GM12878 (cell line): ENCODE measurements at regions of chr3 and their contacts with region 1.

Region 1: DNA sequence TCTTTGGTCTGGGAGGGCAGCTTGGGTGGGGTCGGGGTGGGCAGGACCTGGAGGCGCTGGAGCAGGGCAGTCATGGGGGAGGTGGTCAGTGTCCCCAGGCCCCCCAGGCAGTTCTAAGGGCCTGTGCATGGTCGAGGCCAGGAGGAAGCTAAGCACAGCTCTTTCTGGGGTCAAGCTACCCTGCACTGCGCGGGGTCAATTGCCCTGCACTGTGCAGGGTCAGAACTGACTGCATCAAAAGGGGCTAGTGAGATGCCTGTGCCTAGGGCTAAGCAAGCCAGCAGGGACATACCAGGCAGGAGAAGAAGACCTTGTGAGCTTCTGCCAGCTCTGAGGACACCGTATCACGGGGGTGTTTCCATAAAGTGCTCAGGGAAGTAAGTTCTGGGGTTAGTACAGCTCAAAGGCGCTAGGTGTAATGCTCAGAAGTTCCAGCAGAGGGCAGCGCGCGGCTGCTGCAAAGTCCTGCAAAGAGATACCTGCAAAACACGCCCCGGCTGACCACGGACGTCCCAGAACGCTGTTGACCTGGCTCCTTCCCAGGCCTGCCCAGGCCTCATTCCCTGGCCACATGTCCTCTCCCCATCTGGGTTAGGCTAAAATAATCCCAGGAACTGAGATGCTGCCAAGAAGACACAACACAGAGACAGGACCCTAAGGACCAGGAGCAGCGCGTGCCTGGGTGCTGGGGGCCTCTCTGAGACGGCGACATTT is 18.8 kb upstream of the IQSEC1 start:
- DNase-seq: no peak
- ATAC-seq: peak; percentile 86
- H3K4me3 ChIP-seq: no peak overlapping the region
- H3K27ac ChIP-seq: no peak overlapping the region
- H3K4me1 ChIP-seq: peaks cover 25% of the 10 kb centered on the region
- H3K27me3 ChIP-seq: no peaks in the 10 kb centered on the region
- CTCF ChIP-seq: peak; percentile 94 to 98 (median 95)
- EP300 ChIP-seq: no peak
- POLR2A ChIP-seq: no peak
- RAD21 ChIP-seq: peak; percentile 87

Region 2: DNA sequence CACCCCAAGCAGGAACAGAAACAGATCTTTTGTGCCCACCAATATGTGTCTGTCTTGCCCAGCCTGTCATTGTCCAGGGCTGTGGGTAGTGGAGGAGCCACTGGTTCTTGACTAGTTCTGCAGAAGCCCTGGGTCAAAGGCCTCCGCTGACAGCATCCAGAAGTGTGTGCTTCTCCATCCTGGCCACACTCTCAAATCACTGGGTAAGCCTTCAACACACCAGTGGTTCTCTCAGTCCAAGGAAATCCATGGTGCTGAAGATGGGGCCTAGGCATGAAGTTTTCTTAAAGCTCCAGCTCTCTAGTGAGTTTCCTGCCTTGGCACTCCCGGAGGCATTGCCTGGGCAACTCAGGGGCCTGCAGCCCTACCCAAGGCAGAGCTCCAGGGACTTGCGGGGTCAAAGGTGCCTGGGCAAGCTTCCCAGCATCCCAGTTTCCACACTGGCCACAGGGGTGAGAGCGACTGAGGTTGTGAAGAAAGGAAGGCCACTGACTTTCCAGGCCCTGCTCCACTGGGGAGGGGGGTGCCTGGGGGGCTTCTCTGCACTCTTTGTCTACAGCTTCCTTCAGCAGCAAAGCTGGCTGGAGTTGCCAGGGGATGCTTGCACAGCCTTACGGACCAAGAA is 212.8 kb before region 1 on chr3:
- CTCF ChIA-PET with region 1: no interaction called
- POLR2A ChIA-PET with region 1: no interaction called
- RAD21 ChIA-PET with region 1: no interaction called
- SMC1A ChIA-PET with region 1: no interaction called
- in situ Hi-C with region 1: no loop called
- intact Hi-C with region 1: no loop called
- DNase-seq: no peak
- ATAC-seq: no peak
- H3K4me3 ChIP-seq: no peak overlapping the region
- H3K27ac ChIP-seq: no peak overlapping the region
- H3K4me1 ChIP-seq: peaks cover 14% of the 10 kb centered on the region
- H3K27me3 ChIP-seq: no peaks in the 10 kb centered on the region
- CTCF ChIP-seq: no peak
- EP300 ChIP-seq: no peak
- POLR2A ChIP-seq: no peak
- RAD21 ChIP-seq: no peak

Region 3: DNA sequence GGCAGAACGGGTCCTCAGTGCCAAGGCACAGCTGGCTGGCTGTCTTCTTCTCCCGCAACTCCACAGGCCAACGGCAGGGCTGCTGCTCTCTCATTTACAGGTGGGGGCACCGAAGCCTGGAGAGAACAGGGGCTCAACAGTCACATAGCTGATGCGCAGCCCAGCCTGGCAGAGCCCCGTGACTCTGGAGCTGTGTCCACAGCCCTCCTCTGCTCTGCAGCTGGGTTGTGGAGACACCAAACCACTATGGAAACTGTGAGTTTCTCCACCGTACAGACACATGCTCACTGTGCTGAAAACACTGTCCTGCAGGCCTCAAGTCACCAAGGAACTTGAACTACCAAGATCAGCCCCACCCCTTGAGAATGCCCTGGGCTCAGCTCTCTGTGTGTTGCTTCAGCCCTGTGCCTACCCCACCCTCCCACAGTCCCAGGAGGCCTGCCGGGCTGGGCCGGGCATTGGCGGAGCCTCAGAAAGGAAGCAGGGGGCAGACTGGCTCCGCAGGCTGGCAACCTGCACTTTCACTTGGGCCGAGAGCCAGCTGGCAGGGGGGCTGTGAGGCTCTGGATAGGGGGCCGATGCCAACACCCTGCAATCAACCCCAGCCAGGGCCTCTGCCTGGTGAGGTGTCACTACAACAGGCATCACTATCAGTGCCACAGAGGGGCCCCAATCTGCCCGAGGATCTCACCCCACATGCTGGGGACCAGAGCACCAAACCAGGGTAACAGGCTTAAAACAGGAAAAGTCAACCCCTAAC is 137.0 kb before region 1 on chr3:
- CTCF ChIA-PET with region 1: no interaction called
- POLR2A ChIA-PET with region 1: no interaction called
- RAD21 ChIA-PET with region 1: no interaction called
- SMC1A ChIA-PET with region 1: no interaction called
- in situ Hi-C with region 1: no loop called
- intact Hi-C with region 1: no loop called
- DNase-seq: no peak
- ATAC-seq: peak; percentile 70
- H3K4me3 ChIP-seq: no peak overlapping the region
- H3K27ac ChIP-seq: no peak overlapping the region
- H3K4me1 ChIP-seq: peaks cover 26% of the 10 kb centered on the region
- H3K27me3 ChIP-seq: no peaks in the 10 kb centered on the region
- CTCF ChIP-seq: 0 out of 6 replicates have a peak, but pooled peaks of 1 of the 3 experiments have one; percentile 4
- EP300 ChIP-seq: no peak
- POLR2A ChIP-seq: no peak
- RAD21 ChIP-seq: no peak

Region 4: GRCh38 chr3:13045904-13046568 is 46.0 kb before region 1 on chr3:
- CTCF ChIA-PET with region 1: interaction called, 6 read pairs
- POLR2A ChIA-PET with region 1: no interaction called
- RAD21 ChIA-PET with region 1: interaction called, 3 read pairs
- SMC1A ChIA-PET with region 1: no interaction called
- in situ Hi-C with region 1: no loop called
- intact Hi-C with region 1: loop called (anchors 1 kb)
- DNase-seq: peak; percentile 76
- ATAC-seq: peak; percentile 87
- H3K4me3 ChIP-seq: no peak overlapping the region
- H3K27ac ChIP-seq: peak overlapping the region; percentile 70
- H3K4me1 ChIP-seq: peaks cover 34% of the 10 kb centered on the region
- H3K27me3 ChIP-seq: no peaks in the 10 kb centered on the region
- CTCF ChIP-seq: 0 out of 6 replicates have a peak, but pooled peaks of 1 of the 3 experiments have one; percentile 9
- EP300 ChIP-seq: peak; percentile 40 to 54; a peak in 2 of 4 replicates
- POLR2A ChIP-seq: peak; percentile 70
- RAD21 ChIP-seq: no peak

Region 5: GRCh38 chr3:13104510-13104909 is 12.5 kb after region 1 on chr3:
- CTCF ChIA-PET with region 1: interaction called, 46 read pairs
- POLR2A ChIA-PET with region 1: no interaction called
- RAD21 ChIA-PET with region 1: interaction called, 4 read pairs
- SMC1A ChIA-PET with region 1: interaction called, 11 read pairs
- in situ Hi-C with region 1: no loop called
- intact Hi-C with region 1: no loop called
- DNase-seq: no peak
- ATAC-seq: no peak
- H3K4me3 ChIP-seq: no peak overlapping the region
- H3K27ac ChIP-seq: no peak overlapping the region
- H3K4me1 ChIP-seq: no peaks in the 10 kb centered on the region
- H3K27me3 ChIP-seq: no peaks in the 10 kb centered on the region
- CTCF ChIP-seq: no peak
- EP300 ChIP-seq: no peak
- POLR2A ChIP-seq: no peak
- RAD21 ChIP-seq: no peak

Region 6: GRCh38 chr3:13229273-13229949 is 137.4 kb after region 1 on chr3:
- CTCF ChIA-PET with region 1: interaction called, 15 read pairs
- POLR2A ChIA-PET with region 1: no interaction called
- RAD21 ChIA-PET with region 1: interaction called, 20 read pairs
- SMC1A ChIA-PET with region 1: interaction called, 5 read pairs
- in situ Hi-C with region 1: no loop called
- intact Hi-C with region 1: no loop called
- DNase-seq: peak; percentile 2
- ATAC-seq: peak; percentile 93
- H3K4me3 ChIP-seq: no peak overlapping the region
- H3K27ac ChIP-seq: no peak overlapping the region
- H3K4me1 ChIP-seq: no peaks in the 10 kb centered on the region; the same call in 1 of the 2 replicates
- H3K27me3 ChIP-seq: no peaks in the 10 kb centered on the region
- CTCF ChIP-seq: peak; percentile 53 to 60 (median 59)
- EP300 ChIP-seq: no peak
- POLR2A ChIP-seq: no peak
- RAD21 ChIP-seq: peak; percentile 42; the same call in 1 of the 2 replicates

Region 7: GRCh38 chr3:13414040-13414729 is 322.1 kb after region 1 on chr3:
- CTCF ChIA-PET with region 1: interaction called, 4 read pairs
- POLR2A ChIA-PET with region 1: no interaction called
- RAD21 ChIA-PET with region 1: interaction called, 11 read pairs
- SMC1A ChIA-PET with region 1: interaction called, 7 read pairs
- in situ Hi-C with region 1: no loop called
- intact Hi-C with region 1: no loop called
- DNase-seq: peak; percentile 89
- ATAC-seq: peak; percentile 89
- H3K4me3 ChIP-seq: peak overlapping the region; percentile 80
- H3K27ac ChIP-seq: peak overlapping the region; percentile 98
- H3K4me1 ChIP-seq: peaks cover 46% of the 10 kb centered on the region
- H3K27me3 ChIP-seq: no peaks in the 10 kb centered on the region
- CTCF ChIP-seq: no peak
- EP300 ChIP-seq: peak; percentile 68 to 89; a peak in 3 of 4 replicates
- POLR2A ChIP-seq: peak; percentile 56
- RAD21 ChIP-seq: no peak

Region 8: DNA sequence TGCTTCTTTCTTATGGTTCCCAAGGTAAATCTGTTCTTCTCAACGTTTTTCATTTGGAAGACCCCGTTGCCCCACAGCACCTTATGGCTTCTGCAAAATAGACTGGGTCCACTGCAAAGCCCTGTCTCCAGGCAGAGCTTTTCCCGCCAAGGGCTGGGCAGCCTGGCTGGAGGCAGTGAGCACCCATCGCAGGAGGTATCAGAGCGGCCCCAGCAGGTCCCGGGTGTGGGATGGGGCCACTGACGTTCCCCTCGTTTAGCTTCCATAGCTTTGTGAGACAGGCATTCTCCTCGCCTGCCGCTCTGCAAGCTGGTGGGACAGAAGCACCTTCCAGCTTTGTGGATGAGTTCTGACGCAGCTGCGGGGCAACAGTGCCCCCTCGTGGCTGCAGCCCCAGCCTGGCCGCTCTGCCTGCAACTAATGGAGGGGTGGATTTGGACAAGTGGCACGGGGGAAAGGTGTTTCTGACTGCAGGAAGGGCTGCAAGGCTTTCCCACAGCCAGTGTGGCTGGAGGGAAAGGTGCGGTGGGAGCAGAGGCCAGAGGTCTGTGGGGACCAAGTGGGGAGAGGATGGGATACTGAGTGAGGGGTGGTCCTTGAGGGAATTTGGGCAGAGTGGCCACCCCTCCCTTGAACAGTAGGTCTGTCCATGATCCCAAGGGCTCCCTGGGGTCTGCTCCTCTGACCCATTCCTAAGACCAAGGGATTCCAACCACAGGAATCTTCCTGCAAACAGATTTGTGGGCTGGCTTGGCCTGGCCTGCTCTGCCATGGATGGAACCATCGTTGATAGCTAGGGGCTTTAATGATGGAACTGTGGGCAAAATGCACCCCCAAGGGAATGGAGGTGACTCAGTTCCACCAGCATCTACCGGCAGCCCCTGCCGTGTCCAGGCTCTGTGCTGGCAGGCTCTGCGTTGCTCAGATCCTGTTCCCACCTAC is 556.3 kb after region 1 on chr3:
- CTCF ChIA-PET with region 1: interaction called, 18 read pairs
- POLR2A ChIA-PET with region 1: no interaction called
- RAD21 ChIA-PET with region 1: interaction called, 3 read pairs
- SMC1A ChIA-PET with region 1: interaction called, 3 read pairs
- in situ Hi-C with region 1: no loop called
- intact Hi-C with region 1: loop called (anchors 2 kb)
- DNase-seq: no peak
- ATAC-seq: peak; percentile 88
- H3K4me3 ChIP-seq: no peak overlapping the region
- H3K27ac ChIP-seq: no peak overlapping the region
- H3K4me1 ChIP-seq: no peaks in the 10 kb centered on the region
- H3K27me3 ChIP-seq: peaks cover 2 to 6% of the 10 kb centered on the region in 2 experiments; a peak in 2 of 4 replicates
- CTCF ChIP-seq: peak; percentile 97 to 99 (median 98)
- EP300 ChIP-seq: no peak
- POLR2A ChIP-seq: no peak
- RAD21 ChIP-seq: peak; percentile 92